HCT116 (cell line): ENCODE measurements at regions of chr2 and their contacts with region 1.

Region 1: DNA sequence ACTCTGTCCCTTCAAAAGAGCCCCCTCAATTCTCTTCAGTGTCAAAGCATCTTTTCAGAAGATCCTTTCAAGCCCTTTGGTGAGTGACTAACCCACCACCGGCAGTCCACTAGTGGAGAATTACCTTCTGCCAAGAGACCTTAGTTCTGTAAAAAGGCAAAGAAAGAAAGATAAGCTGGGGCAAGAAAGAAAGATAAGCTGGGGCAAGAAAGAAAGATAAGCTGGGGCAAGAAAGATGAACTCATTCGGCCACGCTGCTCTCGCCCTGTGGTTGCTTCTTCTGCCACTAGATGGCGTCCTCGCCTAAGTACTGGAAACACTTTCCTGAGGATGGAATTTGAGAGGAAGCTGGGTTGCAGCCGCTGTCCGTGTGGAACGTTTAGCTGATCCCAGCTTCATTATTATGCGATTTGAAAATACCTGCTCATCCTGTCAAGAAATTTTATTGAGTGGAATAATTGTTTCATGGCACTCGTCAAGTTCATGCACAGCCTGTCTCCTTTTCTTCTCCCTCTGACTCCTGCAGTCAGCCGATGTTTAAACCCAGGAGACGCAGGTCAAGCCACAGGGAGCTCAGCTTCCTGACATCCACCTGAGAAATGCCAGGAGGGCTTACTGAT is 17.3 kb upstream of the ANXA4 start:
- DNase-seq: peak; percentile 62
- ATAC-seq: peak; percentile 90
- H3K4me3 ChIP-seq: peak overlapping the region; percentile 27 to 54
- H3K27ac ChIP-seq: no peak overlapping the region
- H3K4me1 ChIP-seq: peaks cover 0 to 4% of the 10 kb centered on the region in 2 experiments; a peak in 1 of 4 replicates
- H3K27me3 ChIP-seq: no peaks in the 10 kb centered on the region
- CTCF ChIP-seq: peak; percentile 83 to 91 (median 91)
- POLR2A ChIP-seq: no peak
- RAD21 ChIP-seq: peak; percentile 99

Region 2: GRCh38 chr2:69741619-69742466 is 17.2 kb after region 1 on chr2 and contains the start of gene ANXA4:
- CTCF ChIA-PET with region 1: interaction called, 21 read pairs
- POLR2A ChIA-PET with region 1: interaction called, 3 read pairs
- RAD21 ChIA-PET with region 1: interaction called in 1 of 2 experiments, 5 read pairs
- intact Hi-C with region 1: no loop called
- DNase-seq: peak; percentile 62
- ATAC-seq: peak; percentile 92
- H3K4me3 ChIP-seq: peak within 1 kb of the TSS; percentile 77 to 95
- H3K27ac ChIP-seq: peak within 1 kb of the TSS; percentile 79
- H3K4me1 ChIP-seq: peaks cover 18 to 29% of the 10 kb centered on the region in 2 experiments
- H3K27me3 ChIP-seq: no peaks in the 10 kb centered on the region
- CTCF ChIP-seq: no peak
- POLR2A ChIP-seq: peak; percentile 79
- RAD21 ChIP-seq: no peak; the same call in none of the 2 replicates
- total RNA-seq, gene ANXA4: 64.6 TPM

Region 3: GRCh38 chr2:69804416-69804815 is 79.8 kb after region 1 on chr2:
- CTCF ChIA-PET with region 1: interaction called, 9 read pairs
- POLR2A ChIA-PET with region 1: no interaction called
- RAD21 ChIA-PET with region 1: no interaction called
- intact Hi-C with region 1: loop called (anchors 5 kb)
- DNase-seq: no peak
- ATAC-seq: no peak
- H3K4me3 ChIP-seq: no peak overlapping the region
- H3K27ac ChIP-seq: no peak overlapping the region
- H3K4me1 ChIP-seq: no peaks in the 10 kb centered on the region
- H3K27me3 ChIP-seq: no peaks in the 10 kb centered on the region
- CTCF ChIP-seq: no peak
- POLR2A ChIP-seq: no peak
- RAD21 ChIP-seq: no peak

Region 4: GRCh38 chr2:69829256-69830046 is 104.8 kb after region 1 on chr2 and contains the start of gene GMCL1:
- CTCF ChIA-PET with region 1: interaction called, 19 read pairs
- POLR2A ChIA-PET with region 1: interaction called, 5 read pairs
- RAD21 ChIA-PET with region 1: interaction called, 4 to 5 read pairs
- intact Hi-C with region 1: no loop called
- DNase-seq: peak; percentile 87
- ATAC-seq: peak; percentile 97
- H3K4me3 ChIP-seq: peak within 1 kb of the TSS; percentile 80 to 86
- H3K27ac ChIP-seq: peak within 1 kb of the TSS; percentile 73
- H3K4me1 ChIP-seq: peaks cover 10 to 16% of the 10 kb centered on the region in 2 experiments; a peak in 3 of 4 replicates
- H3K27me3 ChIP-seq: no peaks in the 10 kb centered on the region
- CTCF ChIP-seq: no peak
- POLR2A ChIP-seq: peak; percentile 79
- RAD21 ChIP-seq: no peak
- total RNA-seq, gene GMCL1: 16.7 TPM

Region 5: DNA sequence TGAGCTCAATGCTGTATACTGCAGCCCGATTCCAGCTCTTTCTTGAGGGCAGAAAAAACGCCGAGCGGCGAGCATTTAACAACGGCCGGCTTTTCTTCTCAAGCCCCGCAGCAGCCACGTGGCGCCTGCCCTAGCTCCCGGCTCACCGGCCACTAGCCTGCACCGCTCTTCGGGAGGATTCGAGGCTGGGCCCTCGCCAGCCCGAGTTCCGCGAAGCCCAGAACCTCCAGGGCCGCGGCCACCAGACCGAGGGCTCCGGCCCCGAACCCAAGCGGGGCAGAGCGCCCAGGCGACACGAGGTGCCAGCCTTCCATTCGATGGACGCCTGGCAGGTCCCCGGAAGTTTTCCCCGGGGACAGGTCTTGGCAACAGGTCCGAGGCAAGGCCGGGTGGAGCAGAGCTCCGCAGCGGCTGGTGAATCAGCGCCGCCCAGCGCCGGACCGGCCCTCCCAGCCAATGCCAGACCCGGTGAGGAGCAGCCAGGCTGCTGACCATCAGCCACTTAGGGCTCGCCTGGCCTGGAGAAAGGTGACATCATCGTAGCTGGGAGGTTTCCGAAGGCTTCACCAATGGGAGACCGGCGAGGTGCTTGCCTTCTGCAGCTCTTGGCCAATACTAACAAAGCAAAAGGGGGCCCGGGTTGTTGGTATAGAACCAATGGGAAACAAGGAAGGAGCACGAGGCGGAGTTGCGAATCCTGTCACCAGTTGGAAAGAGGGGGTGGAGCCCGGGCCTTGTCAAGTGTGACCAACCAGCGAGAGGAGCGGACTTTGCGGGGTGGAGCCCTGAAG is 189.7 kb after region 1 on chr2:
- CTCF ChIA-PET with region 1: interaction called, 78 read pairs
- POLR2A ChIA-PET with region 1: interaction called, 8 read pairs
- RAD21 ChIA-PET with region 1: interaction called, 6 to 12 read pairs
- intact Hi-C with region 1: loop called (anchors 5 kb)
- DNase-seq: peak; percentile 100
- ATAC-seq: peak; percentile 91
- H3K4me3 ChIP-seq: peak overlapping the region; percentile 55 to 79
- H3K27ac ChIP-seq: peak overlapping the region; percentile 81
- H3K4me1 ChIP-seq: peaks cover 0 to 18% of the 10 kb centered on the region in 2 experiments; a peak in 3 of 4 replicates
- H3K27me3 ChIP-seq: no peaks in the 10 kb centered on the region
- CTCF ChIP-seq: peak in 1 of 3 experiments; percentile 22; a peak in 1 of 6 replicates
- POLR2A ChIP-seq: no peak
- RAD21 ChIP-seq: peak; percentile 64